Heart right ventricle (tissue), 16 donors: ENCODE measurements at regions of chr9 and their contacts with region 1.

Region 1: DNA sequence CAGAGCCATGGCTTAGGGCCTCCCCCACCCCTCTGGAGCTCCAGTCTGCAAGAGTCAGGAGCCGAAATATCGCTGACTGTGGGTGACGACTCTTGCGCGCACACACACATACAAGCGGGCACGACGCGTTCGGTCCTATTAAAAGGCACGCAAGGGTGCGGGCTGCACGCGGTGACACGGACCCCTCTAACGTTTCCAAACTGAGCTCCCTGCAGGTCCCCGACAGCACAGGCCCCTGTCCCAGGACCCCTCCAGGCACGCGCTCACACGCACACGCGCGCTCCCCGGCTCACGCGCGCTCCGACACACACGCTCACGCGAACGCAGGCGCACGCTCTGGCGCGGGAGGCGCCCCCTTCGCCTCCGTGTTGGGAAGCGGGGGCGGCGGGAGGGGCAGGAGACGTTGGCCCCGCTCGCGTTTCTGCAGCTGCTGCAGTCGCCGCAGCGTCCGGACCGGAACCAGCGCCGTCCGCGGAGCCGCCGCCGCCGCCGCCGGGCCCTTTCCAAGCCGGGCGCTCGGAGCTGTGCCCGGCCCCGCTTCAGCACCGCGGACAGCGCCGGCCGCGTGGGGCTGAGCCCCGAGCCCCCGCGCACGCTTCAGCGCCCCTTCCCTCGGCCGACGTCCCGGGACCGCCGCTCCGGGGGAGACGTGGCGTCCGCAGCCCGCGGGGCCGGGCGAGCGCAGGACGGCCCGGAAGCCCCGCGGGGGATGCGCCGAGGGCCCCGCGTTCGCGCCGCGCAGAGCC is at the start of gene GRIN1:
- DNase-seq: no peak
- ATAC-seq: peak; percentile 45 to 87 (median 67)
- H3K4me3 ChIP-seq: peak within 1 kb of the TSS in 3 of 10 donors; percentile 12 to 24 (median 14)
- H3K27ac ChIP-seq: no peak within 1 kb of the TSS
- H3K4me1 ChIP-seq: peaks cover 0 to 7% (median 5%) of the 10 kb centered on the region in 9 donors
- H3K27me3 ChIP-seq: peaks cover 52 to 99% (median 95%) of the 10 kb centered on the region in 7 donors
- CTCF ChIP-seq: no peak
- total RNA-seq, gene GRIN1: not detected

Region 2: GRCh38 chr9:137176302-137177182 is 37.6 kb after region 1 on chr9:
- intact Hi-C with region 1: loop called in 4 of 10 experiments (anchors 5 to 10 kb)
- DNase-seq: no peak
- ATAC-seq: peak in 2 of 8 donors; percentile 25 to 45
- H3K4me3 ChIP-seq: no peak overlapping the region
- H3K27ac ChIP-seq: no peak overlapping the region
- H3K4me1 ChIP-seq: peaks cover 0 to 11% (median 0%) of the 10 kb centered on the region in 9 donors
- H3K27me3 ChIP-seq: peaks cover 0 to 36% (median 3%) of the 10 kb centered on the region in 7 donors
- CTCF ChIP-seq: peak in 8 of 9 donors; percentile 23 to 57 (median 44)

Region 3: GRCh38 chr9:137302176-137302994 is 163.5 kb after region 1 on chr9 and contains the start of gene NRARP:
- intact Hi-C with region 1: no loop called
- DNase-seq: peak; percentile 92
- ATAC-seq: peak; percentile 39 to 75 (median 62)
- H3K4me3 ChIP-seq: peak within 1 kb of the TSS; percentile 53 to 87 (median 68)
- H3K27ac ChIP-seq: peak within 1 kb of the TSS; percentile 70 to 96 (median 91)
- H3K4me1 ChIP-seq: peaks cover 15 to 85% (median 74%) of the 10 kb centered on the region in 9 donors
- H3K27me3 ChIP-seq: peaks cover 0 to 92% (median 7%) of the 10 kb centered on the region in 7 donors
- CTCF ChIP-seq: peak; percentile 40 to 70 (median 60)
- total RNA-seq, gene NRARP: 2.6 to 20.8 (median 11.7) TPM